Esophagus muscularis mucosa (tissue), 4 donors: ENCODE measurements at regions of chr12 and their contacts with region 1.

Region 1: DNA sequence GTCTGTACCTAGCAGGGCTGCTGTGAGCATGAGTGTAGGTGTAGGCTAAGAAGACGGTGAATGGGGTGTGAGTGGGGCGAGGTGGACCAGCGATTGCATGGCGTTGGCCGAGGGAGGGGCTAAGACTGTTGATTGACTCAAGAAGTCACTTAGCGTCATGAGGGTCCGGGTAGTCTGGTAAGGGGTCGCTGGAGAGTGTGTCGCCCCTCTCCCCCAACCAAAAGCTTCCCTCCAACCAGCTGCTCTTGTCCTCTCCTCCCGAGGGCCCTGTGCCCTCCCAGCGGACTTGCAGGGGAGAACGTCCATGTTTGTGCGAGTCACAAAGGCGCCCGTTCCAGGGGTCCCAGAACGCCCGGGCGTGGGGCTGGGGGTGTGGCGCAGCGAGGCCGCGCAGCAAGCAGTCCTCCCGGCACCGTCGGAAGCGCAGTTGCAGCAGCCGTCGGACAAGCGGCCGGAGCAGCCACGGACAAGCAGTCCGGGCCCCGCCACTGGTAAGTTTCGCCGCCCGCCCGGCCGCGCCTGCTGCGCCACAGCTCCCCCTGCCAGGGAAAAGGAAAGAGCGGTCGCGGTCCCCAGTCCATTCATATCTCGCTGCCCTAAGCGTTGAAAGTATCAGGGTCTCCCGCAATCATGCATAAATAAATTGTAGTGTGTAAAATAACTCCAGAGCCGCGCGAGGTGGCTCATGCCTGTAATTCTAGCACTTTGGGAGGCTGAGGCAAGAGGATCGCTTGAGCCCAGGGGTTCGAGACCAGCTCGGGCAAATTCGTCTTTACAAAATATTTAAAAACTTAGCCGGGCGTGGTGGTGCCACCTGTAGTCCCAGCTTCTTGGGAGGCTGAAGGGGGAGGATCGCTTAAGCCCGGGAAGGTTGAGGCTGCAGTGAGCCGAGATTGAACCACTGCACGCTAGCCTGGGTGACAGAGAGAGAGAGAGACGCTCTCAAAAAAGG is at the start of gene CCDC63:
- DNase-seq: no peak
- H3K4me3 ChIP-seq: peak within 1 kb of the TSS; percentile 27 to 56 (median 42)
- H3K27ac ChIP-seq: no peak within 1 kb of the TSS
- H3K4me1 ChIP-seq: peaks cover 9 to 24% (median 21%) of the 10 kb centered on the region in 4 donors
- H3K27me3 ChIP-seq: no peaks in the 10 kb centered on the region
- CTCF ChIP-seq: peak; percentile 43 to 59 (median 43)
- EP300 ChIP-seq: no peak
- POLR2A ChIP-seq: no peak
- total RNA-seq, gene CCDC63: not detected

Region 2: GRCh38 chr12:110330544-110330943 is 516.3 kb before region 1 on chr12:
- intact Hi-C with region 1: no loop called
- DNase-seq: no peak
- H3K4me3 ChIP-seq: no peak overlapping the region
- H3K27ac ChIP-seq: peak overlapping the region in 1 of 4 donors; percentile 16
- H3K4me1 ChIP-seq: peaks cover 31 to 37% (median 36%) of the 10 kb centered on the region in 4 donors
- H3K27me3 ChIP-seq: no peaks in the 10 kb centered on the region
- CTCF ChIP-seq: no peak
- EP300 ChIP-seq: no peak
- POLR2A ChIP-seq: no peak

Region 3: GRCh38 chr12:110627500-110628195 is 219.2 kb before region 1 on chr12:
- intact Hi-C with region 1: loop called (anchors 10 kb)
- DNase-seq: no peak
- H3K4me3 ChIP-seq: no peak overlapping the region
- H3K27ac ChIP-seq: no peak overlapping the region
- H3K4me1 ChIP-seq: no peaks in the 10 kb centered on the region
- H3K27me3 ChIP-seq: no peaks in the 10 kb centered on the region
- CTCF ChIP-seq: no peak
- EP300 ChIP-seq: no peak
- POLR2A ChIP-seq: no peak

Region 4: DNA sequence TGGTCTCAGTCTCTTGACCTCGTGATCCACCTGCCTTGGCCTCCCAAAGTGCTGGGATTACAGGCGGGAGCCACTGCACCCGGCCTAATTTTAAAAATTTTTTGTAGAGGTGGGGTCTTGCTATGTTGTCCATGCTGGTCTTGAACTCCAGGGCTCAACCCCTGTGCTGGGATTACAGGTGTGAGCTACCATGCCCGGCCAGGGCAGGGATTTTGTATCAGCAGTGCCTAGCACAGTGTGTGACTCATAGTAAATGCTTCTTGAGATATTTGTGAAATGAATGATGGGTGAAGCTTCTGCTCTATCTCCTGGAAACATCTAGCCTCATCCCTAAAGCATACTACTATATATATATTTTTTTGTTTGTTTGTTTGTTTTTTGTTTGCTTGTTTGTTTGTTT is 36.4 kb after region 1 on chr12:
- intact Hi-C with region 1: loop called (anchors 5 kb)
- DNase-seq: no peak
- H3K4me3 ChIP-seq: no peak overlapping the region
- H3K27ac ChIP-seq: no peak overlapping the region
- H3K4me1 ChIP-seq: peaks cover 3 to 17% (median 10%) of the 10 kb centered on the region in 4 donors
- H3K27me3 ChIP-seq: no peaks in the 10 kb centered on the region
- CTCF ChIP-seq: no peak
- EP300 ChIP-seq: no peak
- POLR2A ChIP-seq: no peak

Region 5: GRCh38 chr12:110966081-110966760 is 119.3 kb after region 1 on chr12:
- intact Hi-C with region 1: no loop called
- DNase-seq: no peak
- H3K4me3 ChIP-seq: no peak overlapping the region
- H3K27ac ChIP-seq: no peak overlapping the region
- H3K4me1 ChIP-seq: no peaks in the 10 kb centered on the region
- H3K27me3 ChIP-seq: peaks cover 0 to 63% (median 1%) of the 10 kb centered on the region in 4 donors
- CTCF ChIP-seq: no peak
- EP300 ChIP-seq: no peak
- POLR2A ChIP-seq: no peak